Ovary (tissue), 10 donors: ENCODE measurements at regions of chr5 and their contacts with region 1.

Region 1: GRCh38 chr5:62214701-62215100 is 91.3 kb upstream of the KIF2A start:
- DNase-seq: no peak
- H3K4me3 ChIP-seq: no peak overlapping the region
- H3K27ac ChIP-seq: no peak overlapping the region
- H3K4me1 ChIP-seq: no peaks in the 10 kb centered on the region
- H3K27me3 ChIP-seq: no peaks in the 10 kb centered on the region
- CTCF ChIP-seq: no peak
- EP300 ChIP-seq: no peak
- POLR2A ChIP-seq: no peak

Region 2: DNA sequence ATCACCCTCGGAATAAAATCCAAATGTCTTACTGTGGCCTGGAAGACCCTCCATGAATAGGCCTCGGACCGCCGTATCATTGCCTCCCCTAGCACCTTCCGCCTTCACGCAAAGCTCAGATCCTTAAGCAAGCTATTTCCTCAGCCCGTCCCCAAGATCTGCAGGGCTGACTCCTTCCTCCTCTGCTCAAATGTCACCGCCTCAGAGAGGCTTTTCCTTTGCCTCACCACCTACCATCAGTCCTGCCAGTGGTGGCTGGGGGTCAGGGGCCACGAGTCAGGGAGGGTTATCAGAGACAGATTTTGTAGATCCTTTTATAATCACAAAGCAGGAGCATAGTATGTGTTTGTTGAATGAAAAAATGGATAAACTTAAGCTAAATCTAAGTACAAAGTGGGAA is 16.9 kb after region 1 on chr5:
- intact Hi-C with region 1: no loop called
- DNase-seq: no peak
- H3K4me3 ChIP-seq: no peak overlapping the region
- H3K27ac ChIP-seq: no peak overlapping the region
- H3K4me1 ChIP-seq: no peaks in the 10 kb centered on the region
- H3K27me3 ChIP-seq: no peaks in the 10 kb centered on the region
- CTCF ChIP-seq: no peak
- EP300 ChIP-seq: no peak
- POLR2A ChIP-seq: no peak

Region 3: DNA sequence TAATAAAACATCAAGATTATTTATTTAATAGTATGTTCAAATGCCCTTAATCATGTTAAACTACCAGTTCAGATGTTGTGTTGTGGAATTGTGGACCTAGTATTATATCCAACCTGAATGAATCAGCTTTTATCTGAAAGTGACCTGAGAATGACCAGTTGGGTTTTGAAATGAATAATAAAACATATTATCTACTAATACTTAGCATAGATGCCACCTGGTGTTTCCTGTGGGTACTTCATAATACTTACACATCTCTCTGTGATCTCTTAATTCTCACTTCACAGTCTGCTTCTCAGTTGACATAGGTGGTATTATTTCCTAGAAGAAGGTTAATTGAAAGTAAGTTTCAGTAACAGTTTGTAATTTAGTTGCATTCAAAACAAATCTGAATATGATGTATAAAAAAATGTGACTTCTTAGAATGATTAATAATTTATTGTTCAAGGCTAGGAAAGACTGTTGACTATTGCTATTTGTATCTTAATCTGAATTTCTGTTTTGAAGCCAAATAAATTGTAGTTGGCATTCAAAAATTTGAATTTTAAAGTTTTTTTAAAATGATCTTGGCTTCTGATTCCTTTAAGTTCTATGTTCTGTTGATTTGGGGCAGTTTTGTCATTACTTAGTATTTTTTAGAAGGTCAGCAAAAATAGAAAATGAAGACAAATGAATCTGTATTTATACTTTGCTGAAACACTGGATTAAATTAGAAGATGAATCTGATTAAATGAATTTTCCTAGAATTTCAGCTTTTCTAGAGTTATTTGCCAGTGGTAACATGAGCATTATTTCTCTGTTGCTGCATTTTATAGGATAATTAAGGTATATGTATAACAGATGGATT is 139.6 kb after region 1 on chr5:
- intact Hi-C with region 1: loop called in 1 of 4 experiments (anchors 10 kb)
- DNase-seq: no peak
- H3K4me3 ChIP-seq: no peak overlapping the region
- H3K27ac ChIP-seq: no peak overlapping the region
- H3K4me1 ChIP-seq: no peaks in the 10 kb centered on the region
- H3K27me3 ChIP-seq: no peaks in the 10 kb centered on the region
- CTCF ChIP-seq: peak in 2 of 3 donors; percentile 40 to 50
- EP300 ChIP-seq: no peak
- POLR2A ChIP-seq: no peak